ENCODE measurements at regions of chr5 and their contacts with region 1.

Region 1: GRCh38 chr5:9207817-9208418 is 338.0 kb downstream of the SEMA5A start:
- DNase-seq: no peak
- H3K4me3 ChIP-seq: no peak overlapping the region
- H3K27ac ChIP-seq: no peak overlapping the region
- H3K4me1 ChIP-seq: no peaks in the 10 kb centered on the region
- H3K27me3 ChIP-seq: no peaks in the 10 kb centered on the region
- CTCF ChIP-seq: peak; percentile 43 to 50

Region 2: DNA sequence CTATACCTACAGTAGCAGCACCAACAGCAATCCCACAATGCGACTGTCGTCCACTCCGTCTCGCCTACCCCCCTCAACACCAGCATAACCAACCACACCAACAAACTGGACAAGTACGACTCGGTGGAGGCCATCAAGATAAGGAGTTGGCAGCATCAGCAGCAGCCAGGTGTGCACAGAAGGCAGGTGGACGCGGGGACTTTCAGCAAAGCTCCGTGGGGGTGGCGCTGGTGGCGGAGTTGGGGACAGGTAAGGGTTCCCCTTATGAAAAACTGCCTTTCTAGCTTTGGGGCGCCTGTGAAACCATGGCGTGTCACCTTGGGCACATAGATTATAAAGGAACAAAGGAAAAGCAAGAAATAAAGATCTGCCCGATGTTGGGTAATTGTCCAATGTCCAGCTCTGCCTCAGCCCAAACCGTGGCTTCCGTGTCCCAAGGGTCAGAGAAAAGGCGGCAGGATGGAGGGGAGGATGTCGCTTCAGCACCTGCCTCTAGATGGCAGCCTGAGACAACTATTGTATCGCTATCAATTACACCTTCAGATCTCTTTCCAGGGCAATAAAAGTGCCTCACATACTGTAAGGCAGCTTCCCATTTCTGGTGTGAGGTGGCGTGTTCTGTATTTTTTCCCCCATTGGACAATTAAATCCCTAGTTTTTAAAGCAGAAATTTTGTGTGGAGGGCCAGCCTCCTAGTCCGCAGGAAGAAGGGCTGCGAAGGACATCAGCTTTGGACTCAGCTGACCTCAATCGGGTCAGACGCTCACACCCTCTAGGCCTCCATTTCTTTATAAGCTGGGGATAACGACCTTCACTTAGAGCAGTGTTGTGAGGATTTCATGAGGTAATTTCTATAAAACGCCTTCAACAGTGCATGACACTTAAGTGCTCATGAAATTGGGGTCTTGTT is 1280.2 kb before region 1 on chr5:
- intact Hi-C with region 1: loop called (anchors 10 kb)
- DNase-seq: no peak
- H3K4me3 ChIP-seq: no peak overlapping the region
- H3K27ac ChIP-seq: no peak overlapping the region
- H3K4me1 ChIP-seq: no peaks in the 10 kb centered on the region
- H3K27me3 ChIP-seq: no peaks in the 10 kb centered on the region
- CTCF ChIP-seq: peak; percentile 60 to 66

Region 3: DNA sequence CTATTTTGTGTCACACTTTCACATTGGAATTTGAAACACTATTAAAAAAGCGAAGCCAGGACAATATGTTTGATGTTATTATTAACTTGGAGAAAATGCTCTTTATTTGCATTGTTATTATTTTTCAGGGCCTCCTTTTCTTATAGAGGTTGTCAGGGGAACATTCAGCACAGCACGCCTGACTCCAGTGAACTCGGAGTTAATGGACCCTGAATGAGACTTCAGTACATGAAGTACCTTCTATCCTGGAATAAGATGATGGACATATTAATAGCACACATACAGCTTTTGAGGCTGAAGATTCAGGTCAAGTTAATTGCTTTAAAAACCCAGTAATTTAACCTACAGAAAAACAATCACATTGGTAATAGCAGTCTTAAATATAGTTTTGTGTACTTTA is 315.0 kb before region 1 on chr5:
- intact Hi-C with region 1: no loop called
- DNase-seq: no peak
- H3K4me3 ChIP-seq: no peak overlapping the region
- H3K27ac ChIP-seq: no peak overlapping the region
- H3K4me1 ChIP-seq: no peaks in the 10 kb centered on the region
- H3K27me3 ChIP-seq: no peaks in the 10 kb centered on the region
- CTCF ChIP-seq: no peak

Region 4: GRCh38 chr5:9324348-9325077 is 116.6 kb after region 1 on chr5:
- intact Hi-C with region 1: no loop called
- DNase-seq: no peak
- H3K4me3 ChIP-seq: no peak overlapping the region
- H3K27ac ChIP-seq: no peak overlapping the region
- H3K4me1 ChIP-seq: no peaks in the 10 kb centered on the region
- H3K27me3 ChIP-seq: no peaks in the 10 kb centered on the region
- CTCF ChIP-seq: no peak

Region 5: DNA sequence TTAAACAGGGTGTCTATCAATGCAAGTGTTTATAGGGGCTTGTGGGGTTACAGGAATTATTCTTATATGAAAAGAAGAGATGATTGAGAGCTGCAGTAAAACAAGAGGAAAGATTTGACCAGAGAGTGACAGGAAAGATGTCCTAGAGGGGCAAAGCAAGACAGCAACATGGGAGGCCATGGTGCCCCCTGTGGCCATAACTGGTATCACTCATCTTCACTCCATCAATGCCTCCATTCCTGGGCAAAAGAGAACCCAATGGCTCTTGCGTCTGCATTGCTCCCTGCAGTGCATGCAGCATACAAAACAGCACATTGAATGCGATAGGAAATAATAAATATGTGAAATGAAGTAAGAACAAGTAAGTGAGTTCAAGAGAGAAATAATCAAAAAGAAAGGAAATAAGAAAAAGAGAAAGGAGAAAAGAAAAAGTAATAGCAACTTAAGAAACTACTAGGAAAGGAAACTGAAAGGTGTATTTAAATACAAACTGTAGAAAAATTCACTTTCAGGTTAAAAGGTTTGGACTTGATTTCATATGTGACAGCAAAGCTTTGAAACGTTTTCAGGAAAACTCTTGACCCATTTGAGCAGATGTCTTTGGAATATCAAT is 131.4 kb after region 1 on chr5:
- intact Hi-C with region 1: no loop called
- DNase-seq: no peak
- H3K4me3 ChIP-seq: no peak overlapping the region
- H3K27ac ChIP-seq: no peak overlapping the region
- H3K4me1 ChIP-seq: no peaks in the 10 kb centered on the region
- H3K27me3 ChIP-seq: no peaks in the 10 kb centered on the region
- CTCF ChIP-seq: no peak